Endothelial cell of umbilical vein (primary cell): ENCODE measurements at regions of chr6 and their contacts with region 1.

Region 1: DNA sequence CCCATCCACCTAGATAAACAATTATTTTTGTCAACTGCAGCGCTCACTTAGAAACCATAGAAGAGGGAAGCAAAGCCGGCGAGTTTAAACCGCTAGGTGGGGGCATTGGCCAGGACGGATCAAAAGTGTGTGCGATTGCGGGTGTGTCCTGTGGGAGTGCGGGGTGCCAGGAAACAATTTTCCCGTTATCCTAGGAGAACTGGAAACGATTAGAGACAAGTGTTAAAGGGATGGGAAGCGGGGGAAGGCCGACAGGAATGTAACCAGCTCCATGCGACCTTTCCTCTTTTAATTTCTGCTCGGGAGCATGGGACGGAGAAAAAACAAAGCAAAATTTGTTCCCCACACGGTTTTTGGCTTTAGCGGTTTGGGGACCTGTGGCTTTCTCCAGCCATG is 2.8 kb upstream of the HTR1B start:
- DNase-seq: peak; percentile 77
- H3K4me3 ChIP-seq: peak overlapping the region; percentile 52 to 97 (median 81)
- H3K27ac ChIP-seq: peak overlapping the region; percentile 38
- H3K4me1 ChIP-seq: peaks cover 32% of the 10 kb centered on the region
- H3K27me3 ChIP-seq: no peaks in the 10 kb centered on the region
- CTCF ChIP-seq: peak; percentile 70 to 77
- POLR2A ChIP-seq: no peak

Region 2: DNA sequence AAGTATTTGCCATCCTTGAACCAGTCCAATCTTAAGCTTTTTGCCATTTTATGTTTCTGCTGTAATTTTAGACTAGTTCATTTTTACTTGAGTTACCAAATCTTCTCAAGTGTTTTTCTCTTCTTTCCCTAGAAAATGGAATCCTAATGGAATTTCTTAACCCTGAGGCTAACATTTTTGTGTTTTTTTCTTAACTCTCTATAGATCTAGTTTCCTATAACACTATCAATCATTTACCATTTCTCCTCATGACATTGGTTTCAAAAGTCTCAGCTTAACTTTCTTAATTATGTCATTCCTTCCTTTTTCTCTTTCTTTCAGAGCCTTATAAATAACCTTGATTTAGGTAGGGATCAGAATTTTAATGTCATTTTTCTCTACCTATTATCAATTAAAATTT is 1809.6 kb before region 1 on chr6:
- CTCF ChIA-PET with region 1: no interaction called
- POLR2A ChIA-PET with region 1: no interaction called
- dilution Hi-C with region 1: no loop called
- intact Hi-C with region 1: no loop called
- DNase-seq: no peak
- H3K4me3 ChIP-seq: no peak overlapping the region
- H3K27ac ChIP-seq: no peak overlapping the region
- H3K4me1 ChIP-seq: no peaks in the 10 kb centered on the region
- H3K27me3 ChIP-seq: no peaks in the 10 kb centered on the region
- CTCF ChIP-seq: no peak
- POLR2A ChIP-seq: no peak

Region 3: DNA sequence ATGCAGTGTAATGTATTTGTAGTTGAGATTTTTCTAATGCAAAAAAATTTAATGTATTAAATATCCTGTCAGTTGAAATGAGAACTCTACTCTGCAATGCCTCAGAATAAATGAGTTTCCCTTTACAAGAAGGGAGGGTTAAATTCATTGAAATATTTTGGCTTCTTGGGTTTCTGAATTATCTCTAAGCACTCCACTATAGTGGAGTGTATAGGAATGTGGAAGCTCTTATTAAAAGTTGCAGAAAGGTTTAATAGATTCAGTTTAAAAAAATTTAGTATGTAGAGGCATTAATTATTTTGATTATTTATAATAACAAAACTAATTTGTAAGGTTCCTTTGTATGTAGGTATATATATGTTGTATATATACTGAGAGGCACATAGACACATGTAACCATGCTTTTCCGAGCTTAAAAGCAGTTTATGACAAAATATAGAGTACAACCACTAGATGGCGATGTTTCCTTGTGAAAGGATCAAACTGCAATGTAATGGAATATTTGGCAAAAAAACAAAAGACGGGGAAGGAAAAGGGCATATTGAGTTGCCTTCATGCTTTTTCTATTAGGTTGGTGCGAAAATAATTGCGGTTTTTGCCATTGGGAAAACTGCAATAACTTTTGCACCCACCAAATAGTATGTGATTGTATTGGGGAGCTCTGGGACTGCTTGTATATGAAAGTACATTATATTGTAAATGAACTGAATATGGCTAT is 1572.8 kb before region 1 on chr6:
- CTCF ChIA-PET with region 1: interaction called, 22 read pairs
- POLR2A ChIA-PET with region 1: no interaction called
- dilution Hi-C with region 1: no loop called
- intact Hi-C with region 1: no loop called
- DNase-seq: peak; percentile 81
- H3K4me3 ChIP-seq: no peak overlapping the region
- H3K27ac ChIP-seq: no peak overlapping the region
- H3K4me1 ChIP-seq: no peaks in the 10 kb centered on the region
- H3K27me3 ChIP-seq: no peaks in the 10 kb centered on the region
- CTCF ChIP-seq: peak; percentile 44 to 51
- POLR2A ChIP-seq: no peak

Region 4: DNA sequence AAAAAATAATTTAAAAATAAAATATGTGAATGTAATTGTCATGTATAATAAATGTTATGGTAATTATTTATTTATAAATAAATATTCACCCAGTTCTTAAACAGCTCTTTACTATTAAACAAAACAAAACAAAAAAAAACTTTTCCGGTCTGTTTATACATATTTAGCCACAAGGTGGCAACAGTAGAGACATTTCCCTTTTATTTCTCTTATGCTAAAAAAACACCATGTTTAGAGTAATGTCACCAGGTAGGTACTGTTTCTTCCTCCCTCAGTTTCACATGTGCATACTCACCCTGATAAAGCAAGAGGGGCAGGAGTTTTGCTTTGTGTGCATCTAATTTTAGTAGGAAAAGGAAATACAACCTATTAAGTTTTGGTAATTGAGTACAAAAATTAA is 783.2 kb before region 1 on chr6:
- CTCF ChIA-PET with region 1: interaction called, 63 read pairs
- POLR2A ChIA-PET with region 1: no interaction called
- dilution Hi-C with region 1: no loop called
- intact Hi-C with region 1: loop called (anchors 1 kb)
- DNase-seq: peak; percentile 40
- H3K4me3 ChIP-seq: no peak overlapping the region
- H3K27ac ChIP-seq: no peak overlapping the region
- H3K4me1 ChIP-seq: peaks cover 8% of the 10 kb centered on the region
- H3K27me3 ChIP-seq: no peaks in the 10 kb centered on the region
- CTCF ChIP-seq: peak in 1 of 2 donors; percentile 22
- POLR2A ChIP-seq: no peak

Region 5: GRCh38 chr6:77292564-77293546 is 173.2 kb before region 1 on chr6:
- CTCF ChIA-PET with region 1: interaction called, 3 read pairs
- POLR2A ChIA-PET with region 1: interaction called, 14 read pairs
- dilution Hi-C with region 1: no loop called
- intact Hi-C with region 1: no loop called
- DNase-seq: peak; percentile 97
- H3K4me3 ChIP-seq: no peak overlapping the region
- H3K27ac ChIP-seq: peak overlapping the region; percentile 90
- H3K4me1 ChIP-seq: peaks cover 61% of the 10 kb centered on the region
- H3K27me3 ChIP-seq: no peaks in the 10 kb centered on the region
- CTCF ChIP-seq: no peak
- POLR2A ChIP-seq: no peak

Region 6: DNA sequence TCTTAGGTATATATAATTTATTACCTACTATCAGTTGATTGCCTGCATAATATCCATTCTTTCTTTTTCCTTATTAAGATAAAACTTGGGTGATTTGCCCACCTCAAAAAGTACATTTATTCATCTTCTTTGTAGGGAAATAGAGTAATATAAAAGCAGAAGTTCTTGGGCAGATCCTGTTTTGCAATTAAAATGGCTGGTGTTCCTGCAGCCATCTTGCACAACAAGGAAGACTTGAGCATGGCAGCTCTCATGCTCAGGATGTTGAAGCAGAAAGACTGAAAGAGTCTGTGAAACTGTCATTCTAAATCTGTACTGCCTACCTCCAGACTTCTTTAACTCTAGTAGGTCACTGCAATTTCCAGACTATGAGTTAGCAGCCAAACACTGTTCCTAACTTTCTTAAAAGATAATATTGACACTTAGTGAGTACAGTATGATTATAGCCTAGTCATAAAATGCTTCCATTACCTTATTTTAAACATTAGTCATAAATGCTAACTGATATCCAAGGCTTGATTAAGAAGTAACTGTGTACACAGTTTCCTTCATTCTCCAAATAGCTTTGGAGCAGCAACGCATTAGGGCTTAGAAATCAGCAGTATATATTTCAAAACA is 21.9 kb after region 1 on chr6:
- CTCF ChIA-PET with region 1: interaction called, 10 read pairs
- POLR2A ChIA-PET with region 1: interaction called, 3 read pairs
- dilution Hi-C with region 1: no loop called
- intact Hi-C with region 1: no loop called
- DNase-seq: no peak
- H3K4me3 ChIP-seq: no peak overlapping the region
- H3K27ac ChIP-seq: no peak overlapping the region
- H3K4me1 ChIP-seq: peaks cover 12% of the 10 kb centered on the region
- H3K27me3 ChIP-seq: no peaks in the 10 kb centered on the region
- CTCF ChIP-seq: no peak
- POLR2A ChIP-seq: no peak

Region 7: GRCh38 chr6:78231002-78231401 is 764.9 kb after region 1 on chr6:
- CTCF ChIA-PET with region 1: no interaction called
- POLR2A ChIA-PET with region 1: no interaction called
- dilution Hi-C with region 1: no loop called
- intact Hi-C with region 1: loop called (anchors 10 kb)
- DNase-seq: no peak
- H3K4me3 ChIP-seq: no peak overlapping the region
- H3K27ac ChIP-seq: no peak overlapping the region
- H3K4me1 ChIP-seq: peaks cover 24% of the 10 kb centered on the region
- H3K27me3 ChIP-seq: no peaks in the 10 kb centered on the region
- CTCF ChIP-seq: no peak
- POLR2A ChIP-seq: no peak

Region 8: DNA sequence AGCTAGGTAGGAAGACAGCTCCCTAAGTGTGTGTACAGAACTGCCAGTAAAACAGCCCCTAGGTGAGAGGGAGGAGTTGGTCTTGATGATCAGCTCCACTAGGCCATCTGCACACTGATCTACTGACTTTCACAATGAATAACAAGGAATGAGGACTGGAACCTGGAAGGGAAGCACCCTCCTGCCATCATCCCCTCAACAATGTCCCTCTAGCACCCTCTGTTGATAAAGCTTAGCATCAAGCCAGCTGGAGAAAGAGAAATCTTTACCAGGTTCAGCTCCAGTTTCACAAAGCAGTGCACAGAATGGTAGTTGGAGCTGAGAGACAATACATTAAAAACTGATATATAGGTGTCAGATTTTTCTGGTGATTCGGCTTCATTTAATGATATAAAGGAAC is 1344.1 kb after region 1 on chr6:
- CTCF ChIA-PET with region 1: interaction called, 80 read pairs
- POLR2A ChIA-PET with region 1: no interaction called
- dilution Hi-C with region 1: no loop called
- intact Hi-C with region 1: loop called (anchors 1 kb)
- DNase-seq: peak; percentile 60
- H3K4me3 ChIP-seq: no peak overlapping the region
- H3K27ac ChIP-seq: no peak overlapping the region
- H3K4me1 ChIP-seq: no peaks in the 10 kb centered on the region
- H3K27me3 ChIP-seq: peaks cover 0 to 2% of the 10 kb centered on the region in 2 experiments
- CTCF ChIP-seq: peak; percentile 57 to 64
- POLR2A ChIP-seq: no peak